Posterior cingulate gyrus (tissue), 11 donors: ENCODE measurements at regions of chr22 and their contacts with region 1.

Region 1: GRCh38 chr22:45553351-45554039 is 50.8 kb downstream of the FBLN1 start:
- DNase-seq: peak; percentile 67 to 97 (median 82)

Region 2: DNA sequence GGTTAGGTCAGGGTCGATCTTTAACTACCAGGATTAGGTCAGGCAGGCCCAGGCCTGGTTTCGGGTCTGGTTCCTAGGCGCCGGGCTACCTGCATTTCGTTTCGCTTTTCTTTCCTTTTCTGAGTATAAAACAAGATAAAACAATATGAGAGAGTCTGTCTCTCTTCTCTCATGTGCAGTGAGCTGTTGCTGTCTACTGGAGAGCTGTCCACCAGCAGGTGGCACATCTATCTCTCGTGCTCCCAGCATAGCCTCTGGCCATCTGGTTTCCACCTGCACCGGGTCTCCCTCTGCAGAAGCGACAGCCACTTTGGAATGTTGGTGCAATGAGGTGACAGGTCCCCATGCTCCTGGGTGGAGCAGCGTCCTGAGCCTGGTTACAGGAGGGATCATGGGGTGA is 112.4 kb before region 1 on chr22:
- intact Hi-C with region 1: loop called (anchors 1 kb)
- DNase-seq: peak in 7 of 10 donors; percentile 22 to 90 (median 39)